WTC11 (cell line): ENCODE measurements at regions of chr6 and their contacts with region 1.

Region 1: DNA sequence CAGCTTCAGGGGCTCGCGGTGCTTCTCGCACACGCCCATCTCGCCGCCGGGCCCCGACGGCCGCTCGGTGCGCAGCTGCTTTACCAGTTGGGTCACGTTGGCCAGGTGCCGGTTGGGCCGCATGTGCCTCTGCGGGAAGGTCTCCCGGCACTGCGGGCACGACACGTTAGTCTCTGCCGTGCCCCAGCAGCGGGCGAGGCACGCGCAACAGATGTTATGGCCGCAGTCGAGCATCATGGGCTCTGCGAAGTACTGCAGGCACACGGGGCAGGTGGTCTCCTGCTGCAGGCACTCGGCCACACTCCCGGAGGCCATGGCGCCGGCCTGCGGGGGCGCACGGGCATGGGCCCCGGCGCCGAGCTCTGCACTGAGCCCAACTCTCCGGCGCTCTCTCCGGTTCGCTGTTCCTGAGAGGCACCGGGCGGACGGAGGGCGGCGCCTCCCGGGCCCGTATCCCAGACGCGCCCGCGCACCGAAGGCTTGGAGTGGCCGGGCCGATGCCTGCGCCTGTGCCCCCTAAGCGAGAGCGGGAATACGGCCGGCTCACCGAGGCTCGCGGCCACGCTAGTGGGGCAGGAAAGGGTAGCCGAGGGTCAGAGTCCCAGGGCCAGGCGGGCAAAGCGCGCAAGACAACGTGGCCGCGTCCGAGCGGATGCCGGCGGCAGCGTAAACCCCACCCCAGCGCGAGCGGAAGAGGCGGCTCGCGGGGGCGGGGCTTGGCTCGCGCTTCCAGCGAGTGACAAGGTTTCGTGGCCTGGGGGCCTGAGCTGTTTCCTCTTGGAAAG is at the start of gene TRIM27:
- DNase-seq: peak; percentile 87
- ATAC-seq: peak; percentile 90
- H3K4me3 Mint-ChIP-seq: peak within 1 kb of the TSS; percentile 82
- H3K27ac Mint-ChIP-seq: peak within 1 kb of the TSS; percentile 88
- H3K4me1 Mint-ChIP-seq: peaks cover 20% of the 10 kb centered on the region
- H3K27me3 Mint-ChIP-seq: no peaks in the 10 kb centered on the region
- CTCF ChIP-seq: no peak
- total RNA-seq, gene TRIM27: 65.8 to 79.8 TPM (median 68.3 TPM) in 3 replicates

Region 2: DNA sequence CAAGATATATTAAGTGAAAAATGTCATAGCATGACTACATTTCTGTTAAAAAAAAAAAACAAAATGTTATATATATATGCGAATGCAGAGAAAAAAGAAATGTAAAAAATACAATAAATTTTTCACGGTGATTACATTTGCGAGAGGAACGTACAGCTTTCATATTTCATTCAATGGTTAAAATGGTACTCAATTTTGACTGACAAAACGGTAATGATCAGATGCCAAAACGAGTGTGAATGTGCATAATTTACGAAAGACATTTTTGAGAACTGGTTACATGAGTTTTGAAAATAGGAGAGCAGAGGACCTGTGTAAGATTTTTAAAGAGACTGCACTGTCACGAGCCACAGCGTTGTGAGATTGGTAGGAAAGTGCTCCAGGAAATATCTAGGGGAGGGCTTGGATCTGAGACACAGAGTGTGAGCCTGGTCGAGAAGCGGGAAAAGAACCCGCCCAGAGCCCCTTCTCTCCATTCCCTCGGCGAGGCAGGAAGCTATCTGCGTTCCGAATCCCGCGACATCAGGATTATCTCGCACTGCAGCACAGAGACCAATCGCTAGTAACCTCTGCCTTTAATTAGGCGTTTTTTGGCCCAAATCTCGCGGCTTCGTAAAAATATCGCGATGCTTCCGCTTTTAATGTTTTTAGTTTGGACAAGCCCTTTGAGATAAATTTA is 28.2 kb before region 1 on chr6:
- CTCF ChIA-PET with region 1: interaction called, 4 read pairs
- POLR2A ChIA-PET with region 1: interaction called, 11 read pairs
- DNase-seq: peak; percentile 92
- ATAC-seq: peak; percentile 84
- H3K4me3 Mint-ChIP-seq: peak overlapping the region; percentile 91
- H3K27ac Mint-ChIP-seq: peak overlapping the region; percentile 97
- H3K4me1 Mint-ChIP-seq: peaks cover 9% of the 10 kb centered on the region; the same call in 1 of the 2 replicates
- H3K27me3 Mint-ChIP-seq: 0 out of 2 replicates have a peak, but pooled peaks cover 2% of the 10 kb centered on the region
- CTCF ChIP-seq: no peak

Region 3: DNA sequence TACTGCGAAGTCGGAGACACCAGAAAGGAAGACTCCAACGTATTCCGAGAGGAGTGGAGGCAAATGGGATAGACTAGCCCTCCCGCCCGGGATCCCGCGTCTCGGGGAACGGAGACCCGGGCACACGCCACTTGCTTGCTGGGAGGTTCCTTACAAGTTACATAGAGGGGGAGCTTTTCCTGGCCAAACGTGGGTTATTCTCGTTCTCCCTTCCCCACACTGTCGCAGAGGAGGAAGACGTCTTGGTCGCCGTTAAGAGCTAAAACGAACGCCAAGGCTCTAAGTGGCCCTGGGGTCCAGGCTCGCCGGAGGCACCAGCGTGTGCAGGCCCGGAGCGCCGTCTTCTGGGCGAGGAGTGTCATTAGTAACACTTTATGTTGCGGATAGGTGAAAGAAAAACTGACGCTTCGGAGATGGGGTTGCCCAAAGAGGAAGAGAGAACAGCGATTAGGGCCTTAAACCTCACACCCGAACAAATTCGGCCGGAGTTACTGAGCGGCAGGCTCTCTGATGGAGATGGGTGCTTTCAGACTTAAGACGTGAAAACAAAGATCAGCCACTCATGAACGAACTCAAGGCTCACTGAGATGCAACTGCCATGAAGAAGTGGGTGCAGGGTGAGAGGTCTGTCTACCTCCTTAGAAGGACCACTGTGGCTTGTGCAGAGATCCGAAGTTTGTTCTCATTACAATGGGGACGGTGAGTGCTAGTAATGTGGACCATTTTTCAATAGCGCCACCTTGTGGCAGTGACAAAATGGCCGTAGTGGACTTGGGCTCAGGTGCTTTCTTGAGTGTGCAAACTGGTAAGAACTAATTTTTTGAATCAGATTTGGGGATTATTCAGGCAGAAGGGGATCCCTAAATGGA is 93.3 kb after region 1 on chr6:
- CTCF ChIA-PET with region 1: interaction called, 10 read pairs
- POLR2A ChIA-PET with region 1: no interaction called
- DNase-seq: peak; percentile 87
- ATAC-seq: peak; percentile 89
- H3K4me3 Mint-ChIP-seq: peak overlapping the region; percentile 87
- H3K27ac Mint-ChIP-seq: no peak overlapping the region
- H3K4me1 Mint-ChIP-seq: no peaks in the 10 kb centered on the region; the same call in none of the 2 replicates
- H3K27me3 Mint-ChIP-seq: peaks cover 43% of the 10 kb centered on the region
- CTCF ChIP-seq: peak; percentile 75